Activated CD4-positive, alpha-beta memory T cell treated with anti-CD3 and anti-CD28 coated beads for 36 hours (primary cell): ENCODE measurements at regions of chr3 and their contacts with region 1.

Region 1: DNA sequence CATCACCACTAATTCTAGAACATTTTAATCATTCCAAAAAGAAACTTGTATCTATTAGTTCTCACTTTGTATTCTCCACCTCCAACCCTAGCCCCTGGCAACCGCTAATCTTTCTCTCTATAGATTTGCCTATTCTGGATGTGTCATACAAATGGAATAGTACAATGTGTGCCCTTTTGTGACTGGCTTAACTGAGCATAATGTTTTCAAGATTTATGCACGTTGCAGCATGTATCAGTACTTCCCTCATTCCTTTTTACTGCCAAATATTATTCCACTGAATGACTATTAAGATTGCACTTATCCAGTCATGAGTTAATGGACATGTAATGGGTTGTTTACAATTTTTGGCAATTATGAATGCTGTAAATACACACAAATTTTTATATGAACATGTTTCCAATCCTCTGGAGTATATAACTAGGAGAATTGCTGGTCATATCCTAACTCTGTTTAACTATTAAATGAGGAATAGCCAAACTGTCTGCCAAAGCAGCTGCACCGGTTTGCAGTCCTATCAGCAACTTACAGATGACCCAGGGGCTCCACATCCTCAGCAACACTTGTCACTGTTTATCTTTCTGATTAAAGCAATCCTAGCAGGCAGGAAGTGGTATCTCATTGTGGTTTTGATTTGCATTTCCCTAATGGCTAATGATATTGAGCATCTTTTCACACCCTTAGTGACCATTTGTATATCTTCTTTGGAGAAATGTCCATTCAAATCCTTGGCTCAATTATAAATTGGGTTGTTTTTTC is 42.9 kb downstream of the DCUN1D1 start:
- DNase-seq: no peak
- H3K4me3 Mint-ChIP-seq: no peak overlapping the region
- H3K27ac Mint-ChIP-seq: no peak overlapping the region
- H3K4me1 Mint-ChIP-seq: peaks cover 37% of the 10 kb centered on the region
- H3K27me3 Mint-ChIP-seq: no peaks in the 10 kb centered on the region

Region 2: GRCh38 chr3:182917134-182917533 is 20.3 kb before region 1 on chr3:
- CTCF ChIA-PET with region 1: no interaction called
- POLR2A ChIA-PET with region 1: no interaction called
- intact Hi-C with region 1: loop called (anchors 2 kb)
- DNase-seq: no peak
- H3K4me3 Mint-ChIP-seq: no peak overlapping the region
- H3K27ac Mint-ChIP-seq: no peak overlapping the region
- H3K4me1 Mint-ChIP-seq: peaks cover 21% of the 10 kb centered on the region
- H3K27me3 Mint-ChIP-seq: no peaks in the 10 kb centered on the region

Region 3: GRCh38 chr3:182979674-182980191 is 42.3 kb after region 1 on chr3:
- CTCF ChIA-PET with region 1: no interaction called
- POLR2A ChIA-PET with region 1: no interaction called
- intact Hi-C with region 1: loop called (anchors 5 kb)
- DNase-seq: peak; percentile 42
- H3K4me3 Mint-ChIP-seq: peak overlapping the region; percentile 83
- H3K27ac Mint-ChIP-seq: peak overlapping the region; percentile 73
- H3K4me1 Mint-ChIP-seq: peaks cover 20% of the 10 kb centered on the region
- H3K27me3 Mint-ChIP-seq: no peaks in the 10 kb centered on the region

Region 4: DNA sequence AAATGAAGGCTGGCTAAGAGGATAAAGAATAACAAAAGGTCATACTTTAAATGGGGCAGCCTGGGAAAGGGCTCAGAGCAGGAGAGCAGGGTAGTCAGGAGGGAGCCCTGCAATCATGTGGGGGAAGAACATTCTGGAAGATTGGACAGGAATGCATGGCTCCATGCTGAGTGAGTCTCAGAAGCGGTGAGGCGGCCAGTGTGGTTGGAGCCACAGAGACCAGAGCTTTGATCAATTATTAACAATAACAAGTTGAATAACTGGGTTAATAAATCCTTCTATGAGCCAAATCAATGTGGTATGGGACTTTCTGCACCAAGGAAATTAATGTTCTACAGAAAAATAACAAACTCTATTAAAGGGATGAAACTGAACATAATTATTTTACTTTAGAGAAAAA is 100.7 kb after region 1 on chr3:
- CTCF ChIA-PET with region 1: no interaction called
- POLR2A ChIA-PET with region 1: no interaction called
- intact Hi-C with region 1: no loop called
- DNase-seq: no peak
- H3K4me3 Mint-ChIP-seq: no peak overlapping the region
- H3K27ac Mint-ChIP-seq: no peak overlapping the region
- H3K4me1 Mint-ChIP-seq: no peaks in the 10 kb centered on the region
- H3K27me3 Mint-ChIP-seq: no peaks in the 10 kb centered on the region